ENCODE measurements at regions of chr3 and their contacts with region 1.

Region 1: GRCh38 chr3:88113311-88114162 is 36.2 kb upstream of the C3orf38 start:
- DNase-seq: peak in 2 of 5 donors; percentile 30 to 47
- ATAC-seq: peak in 3 of 4 donors; percentile 81 to 87 (median 83)
- H3K4me3 ChIP-seq: no peak overlapping the region
- H3K27ac ChIP-seq: no peak overlapping the region
- H3K4me1 ChIP-seq: peaks cover 0 to 16% (median 3%) of the 10 kb centered on the region in 12 donors
- H3K27me3 ChIP-seq: no peaks in the 10 kb centered on the region
- CTCF ChIP-seq: peak; percentile 61 to 89 (median 76)
- POLR2A ChIP-seq: no peak

Region 2: DNA sequence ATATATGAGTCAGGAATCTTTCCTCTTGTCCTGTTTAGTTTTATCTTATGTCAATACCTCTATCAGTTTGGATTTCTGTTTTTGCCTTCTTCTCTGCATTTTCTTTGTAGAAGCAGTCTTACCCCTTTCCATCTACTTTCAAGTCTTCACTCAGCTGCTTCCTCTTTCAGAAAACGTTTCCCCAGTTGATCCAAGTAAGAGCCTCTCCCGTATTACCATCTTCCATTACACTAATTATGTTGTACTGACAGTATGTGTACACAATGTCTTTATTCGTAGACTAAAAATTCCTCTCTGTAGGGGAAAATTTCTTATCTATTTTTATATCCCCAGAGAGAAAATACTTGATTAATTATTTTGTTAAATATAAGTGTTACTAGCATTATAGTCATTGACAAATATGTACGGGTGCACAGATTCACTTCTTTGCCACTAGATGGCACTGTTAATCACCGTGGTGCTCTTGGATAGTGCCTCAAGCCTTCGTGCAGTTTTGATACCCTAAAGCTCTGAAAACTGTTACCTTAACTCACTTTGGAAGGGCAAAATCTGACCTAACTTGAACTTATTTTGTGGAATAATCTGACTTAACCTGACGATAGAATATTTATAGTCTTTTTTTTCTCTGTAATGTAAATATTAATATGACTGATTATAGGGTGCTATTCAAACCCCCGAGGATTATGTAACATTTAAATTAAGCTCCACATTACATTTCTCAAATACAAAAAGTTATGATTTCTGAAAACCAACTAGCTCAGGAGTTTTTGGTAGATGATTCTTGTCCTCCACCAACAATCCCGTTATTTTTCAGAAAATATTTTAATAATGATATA is 763.0 kb before region 1 on chr3:
- intact Hi-C with region 1: loop called in 6 of 10 experiments (anchors 2 to 10 kb)
- DNase-seq: no peak
- ATAC-seq: peak in 3 of 4 donors; percentile 61 to 78 (median 70)
- H3K4me3 ChIP-seq: no peak overlapping the region
- H3K27ac ChIP-seq: no peak overlapping the region
- H3K4me1 ChIP-seq: no peaks in the 10 kb centered on the region
- H3K27me3 ChIP-seq: no peaks in the 10 kb centered on the region
- CTCF ChIP-seq: peak; percentile 73 to 95 (median 86)
- POLR2A ChIP-seq: no peak

Region 3: GRCh38 chr3:87771341-87772192 is 342.0 kb before region 1 on chr3:
- intact Hi-C with region 1: loop called in 3 of 10 experiments (anchors 5 to 10 kb)
- DNase-seq: peak in 1 of 5 donors; percentile 25
- ATAC-seq: peak in 1 of 4 donors; percentile 61
- H3K4me3 ChIP-seq: no peak overlapping the region
- H3K27ac ChIP-seq: no peak overlapping the region
- H3K4me1 ChIP-seq: no peaks in the 10 kb centered on the region
- H3K27me3 ChIP-seq: peaks cover 0 to 6% (median 0%) of the 10 kb centered on the region in 9 donors
- CTCF ChIP-seq: peak in 11 of 12 donors; percentile 27 to 58 (median 45)
- POLR2A ChIP-seq: no peak

Region 4: GRCh38 chr3:88003115-88003755 is 110.3 kb before region 1 on chr3:
- intact Hi-C with region 1: loop called in 4 of 10 experiments (anchors 5 to 10 kb)
- DNase-seq: no peak
- ATAC-seq: no peak
- H3K4me3 ChIP-seq: no peak overlapping the region
- H3K27ac ChIP-seq: no peak overlapping the region
- H3K4me1 ChIP-seq: peaks cover 0 to 11% (median 0%) of the 10 kb centered on the region in 12 donors
- H3K27me3 ChIP-seq: peaks cover 0 to 3% (median 0%) of the 10 kb centered on the region in 9 donors
- CTCF ChIP-seq: peak; percentile 57 to 79 (median 70)
- POLR2A ChIP-seq: no peak

Region 5: DNA sequence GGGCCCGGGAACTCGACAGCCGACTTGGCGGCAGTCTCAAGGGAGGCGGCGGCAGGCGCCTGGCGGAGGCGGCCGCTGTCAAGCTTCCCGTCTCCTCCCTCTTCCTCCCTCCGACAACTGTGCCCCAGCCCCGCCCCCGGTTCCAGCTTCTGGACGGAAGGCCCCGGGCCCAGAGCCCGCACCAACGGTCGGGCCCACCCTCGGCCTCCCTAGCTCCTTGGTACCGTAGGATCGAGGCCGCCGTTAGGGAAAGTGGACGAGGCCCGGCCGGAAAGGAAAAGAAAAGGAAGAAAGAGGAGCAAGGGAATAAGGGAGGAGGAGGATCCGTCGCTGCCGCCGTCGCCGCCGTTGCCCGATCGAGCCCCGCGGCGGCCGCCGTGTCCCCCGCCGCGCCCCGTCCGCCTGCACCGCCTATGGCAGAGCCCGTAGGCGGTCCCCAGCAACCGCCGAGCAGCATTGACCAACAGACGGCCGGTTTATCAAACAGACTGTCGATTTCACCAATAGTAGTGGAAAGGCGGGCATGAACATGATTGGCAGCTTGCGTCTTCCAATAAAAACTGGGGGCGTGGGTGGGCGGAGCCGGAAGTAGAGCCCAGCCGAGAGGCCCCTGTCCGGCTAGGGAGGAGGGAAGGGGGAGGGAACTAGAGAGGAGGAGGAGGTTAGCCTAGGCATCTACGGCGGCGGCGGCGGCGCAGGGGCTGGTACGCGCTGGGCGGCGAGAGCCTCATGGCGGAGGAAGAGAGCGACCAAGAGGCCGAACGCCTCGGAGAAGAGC is 54.8 kb before region 1 on chr3 and contains the starts of genes CGGBP1 and ZNF654:
- intact Hi-C with region 1: loop called in 7 of 10 experiments (anchors 2 to 10 kb)
- DNase-seq: peak; percentile 98
- ATAC-seq: peak; percentile 97 to 99 (median 98)
- H3K4me3 ChIP-seq: peak within 1 kb of the TSS; percentile 75 to 94 (median 86)
- H3K27ac ChIP-seq: peak within 1 kb of the TSS; percentile 91 to 99 (median 96)
- H3K4me1 ChIP-seq: peaks cover 7 to 65% (median 37%) of the 10 kb centered on the region in 12 donors
- H3K27me3 ChIP-seq: no peaks in the 10 kb centered on the region
- CTCF ChIP-seq: no peak
- POLR2A ChIP-seq: peak; percentile 20 to 76
- total RNA-seq, gene CGGBP1: 41.9 to 58.8 (median 46.0) TPM
- total RNA-seq, gene ZNF654: 5.5 to 15.9 (median 11.4) TPM

Measured in heart left ventricle (tissue), 16 donors.